ENCODE measurements at regions of chr5 and their contacts with region 1.

Region 1: DNA sequence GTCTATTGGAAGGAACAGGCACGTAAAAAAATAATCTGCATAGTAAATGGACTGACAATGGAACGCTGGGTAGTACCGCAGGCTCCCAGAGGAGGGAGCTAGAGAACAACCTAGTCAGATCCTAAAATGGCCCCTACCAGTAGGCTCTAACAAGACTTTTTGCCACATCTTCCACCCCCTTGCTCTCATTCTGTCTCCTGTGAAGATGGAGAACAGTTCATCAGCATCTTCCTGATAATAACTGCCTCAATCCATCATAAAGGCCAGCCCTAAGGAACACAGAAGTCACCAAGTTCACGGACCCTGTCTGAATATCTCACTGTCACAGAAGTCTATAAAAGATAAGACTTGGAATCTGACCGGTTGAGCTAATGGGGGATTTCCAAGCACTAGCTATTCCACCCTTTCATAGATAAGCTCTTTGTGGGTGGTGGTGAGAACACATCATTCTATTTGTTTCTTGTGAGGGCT is 133.4 kb downstream of the SLC1A3 start:
- DNase-seq: peak; percentile 71
- ATAC-seq: peak; percentile 48

Region 2: GRCh38 chr5:36298516-36298915 is 441.3 kb before region 1 on chr5:
- intact Hi-C with region 1: no loop called
- DNase-seq: no peak
- ATAC-seq: no peak

Region 3: DNA sequence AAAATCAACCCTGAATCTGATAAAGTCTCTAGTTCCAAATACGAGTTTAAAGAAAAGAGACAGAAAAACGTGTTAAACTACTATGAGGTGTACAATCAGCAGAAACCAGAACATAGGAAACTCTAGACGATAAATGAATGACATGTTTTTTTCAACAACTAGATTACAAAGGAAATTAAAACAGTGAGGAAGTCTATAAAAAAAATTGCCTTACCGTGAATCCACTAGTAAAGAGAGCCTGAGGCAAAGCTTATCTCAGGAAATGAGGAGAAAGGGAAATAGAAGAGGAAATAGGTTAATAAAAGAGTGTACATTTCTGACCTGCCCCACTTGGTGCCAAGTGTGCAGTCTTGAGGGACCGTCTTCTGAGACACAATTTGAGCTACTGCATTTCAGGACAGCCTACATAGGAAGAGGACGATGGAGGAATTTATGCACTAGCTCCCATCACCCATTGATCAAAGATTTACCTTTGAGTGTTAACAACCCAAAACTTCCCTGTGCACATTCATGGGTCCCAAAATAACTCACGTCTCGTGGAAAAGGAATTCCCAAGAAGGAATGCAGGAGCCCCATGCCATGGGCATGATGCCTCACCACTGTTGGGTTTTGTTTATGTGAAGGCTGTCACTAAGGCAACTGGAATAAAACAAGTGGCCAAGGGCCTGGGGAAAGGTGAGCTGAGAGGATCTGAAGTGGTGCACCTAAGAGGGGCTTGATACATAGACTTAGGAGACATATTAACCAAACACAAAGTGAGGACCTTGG is 187.0 kb before region 1 on chr5:
- intact Hi-C with region 1: no loop called
- DNase-seq: peak; percentile 47
- ATAC-seq: peak; percentile 96

Region 4: GRCh38 chr5:36820900-36821299 is 81.1 kb after region 1 on chr5:
- intact Hi-C with region 1: no loop called
- DNase-seq: no peak
- ATAC-seq: no peak

Region 5: DNA sequence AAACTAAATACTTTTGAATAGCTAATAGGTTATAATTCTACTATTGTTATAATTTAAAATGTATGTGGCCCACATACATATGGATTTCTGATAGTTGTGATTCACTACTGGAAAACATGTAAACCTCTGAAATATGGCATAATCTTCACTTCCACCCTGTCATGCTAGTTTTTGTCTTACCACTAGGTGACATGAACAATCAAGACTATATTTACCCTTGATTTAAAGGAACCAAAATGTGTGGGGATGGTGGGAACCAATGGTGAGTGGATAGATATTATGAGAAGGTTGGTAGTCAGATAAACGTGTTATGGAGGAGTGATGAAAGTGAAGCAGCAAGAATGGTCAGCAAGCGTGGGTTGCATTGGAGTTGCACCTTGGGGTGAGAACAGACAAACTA is 126.4 kb after region 1 on chr5:
- intact Hi-C with region 1: loop called (anchors 10 kb)
- DNase-seq: no peak
- ATAC-seq: no peak

Region 6: GRCh38 chr5:37005946-37006540 is 266.3 kb after region 1 on chr5:
- intact Hi-C with region 1: loop called (anchors 10 kb)
- DNase-seq: no peak
- ATAC-seq: no peak